H1 (cell line): ENCODE measurements at regions of chr3 and their contacts with region 1.

Region 1: DNA sequence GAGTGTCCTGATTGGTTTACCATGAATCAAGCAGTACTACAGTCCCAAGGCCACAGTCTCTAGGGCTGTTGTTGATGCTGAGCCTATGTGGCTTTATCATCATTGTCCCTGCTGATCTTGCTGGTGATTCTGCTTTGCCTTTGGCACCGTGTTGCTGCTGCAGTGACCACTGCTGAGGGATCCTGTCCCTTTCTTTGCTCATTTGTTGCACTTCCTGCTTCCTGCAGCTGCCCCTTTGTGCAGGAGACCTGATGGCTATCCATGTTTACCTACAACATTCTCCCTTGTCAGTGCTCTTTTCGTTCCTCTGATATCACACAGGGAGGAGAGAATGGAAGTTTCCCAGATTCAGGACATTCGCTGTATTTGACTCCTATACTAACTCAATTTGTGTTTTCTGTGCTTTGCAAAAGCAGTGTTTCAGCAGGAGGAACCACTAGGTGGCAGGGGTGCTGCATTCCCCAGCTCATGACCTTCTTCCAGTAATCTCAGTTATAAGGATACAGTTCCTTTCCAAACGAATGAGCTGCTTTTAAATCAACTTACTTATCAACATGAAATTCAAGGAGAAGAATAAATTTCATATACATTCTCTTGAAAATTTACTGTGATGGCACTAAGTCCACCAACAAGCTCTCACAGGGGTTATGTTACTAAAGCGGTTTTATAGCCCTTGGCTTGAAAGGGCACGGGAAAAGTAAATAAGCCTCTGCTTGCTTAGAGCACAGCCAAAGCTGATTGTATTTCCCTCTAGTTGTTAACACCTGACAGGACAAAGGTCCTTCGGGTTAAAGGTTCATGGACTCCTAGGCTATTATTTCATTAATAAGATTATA is 9.7 kb upstream of the THUMPD3 start:
- DNase-seq: peak; percentile 34 to 74
- H3K4me3 ChIP-seq: no peak overlapping the region
- H3K27ac ChIP-seq: peak overlapping the region; percentile 76
- H3K4me1 ChIP-seq: peaks cover 10 to 30% (median 16%) of the 10 kb centered on the region in 4 experiments
- H3K27me3 ChIP-seq: no peaks in the 10 kb centered on the region
- CTCF ChIP-seq: peak; percentile 56 to 90 (median 80)
- EP300 ChIP-seq: no peak
- POLR2A ChIP-seq: no peak
- RAD21 ChIP-seq: peak; percentile 86 to 88

Region 2: GRCh38 chr3:9047452-9048346 is 305.4 kb before region 1 on chr3:
- CTCF ChIA-PET with region 1: no interaction called
- POLR2A ChIA-PET with region 1: no interaction called
- DNase-seq: no peak
- H3K4me3 ChIP-seq: no peak overlapping the region
- H3K27ac ChIP-seq: no peak overlapping the region
- H3K4me1 ChIP-seq: peaks cover 0 to 4% (median 0%) of the 10 kb centered on the region in 4 experiments; a peak in 2 of 7 replicates
- H3K27me3 ChIP-seq: no peaks in the 10 kb centered on the region
- CTCF ChIP-seq: no peak
- EP300 ChIP-seq: no peak
- POLR2A ChIP-seq: no peak
- RAD21 ChIP-seq: no peak

Region 3: GRCh38 chr3:9147215-9147895 is 205.8 kb before region 1 on chr3:
- CTCF ChIA-PET with region 1: no interaction called
- POLR2A ChIA-PET with region 1: no interaction called
- DNase-seq: no peak
- H3K4me3 ChIP-seq: no peak overlapping the region
- H3K27ac ChIP-seq: no peak overlapping the region
- H3K4me1 ChIP-seq: no peaks in the 10 kb centered on the region
- H3K27me3 ChIP-seq: no peaks in the 10 kb centered on the region
- CTCF ChIP-seq: no peak
- EP300 ChIP-seq: no peak
- POLR2A ChIP-seq: no peak
- RAD21 ChIP-seq: no peak

Region 4: GRCh38 chr3:9266716-9267115 is 86.4 kb before region 1 on chr3:
- CTCF ChIA-PET with region 1: no interaction called
- POLR2A ChIA-PET with region 1: no interaction called
- DNase-seq: no peak
- H3K4me3 ChIP-seq: no peak overlapping the region
- H3K27ac ChIP-seq: no peak overlapping the region
- H3K4me1 ChIP-seq: no peaks in the 10 kb centered on the region
- H3K27me3 ChIP-seq: no peaks in the 10 kb centered on the region
- CTCF ChIP-seq: no peak
- EP300 ChIP-seq: no peak
- POLR2A ChIP-seq: no peak
- RAD21 ChIP-seq: no peak

Region 5: DNA sequence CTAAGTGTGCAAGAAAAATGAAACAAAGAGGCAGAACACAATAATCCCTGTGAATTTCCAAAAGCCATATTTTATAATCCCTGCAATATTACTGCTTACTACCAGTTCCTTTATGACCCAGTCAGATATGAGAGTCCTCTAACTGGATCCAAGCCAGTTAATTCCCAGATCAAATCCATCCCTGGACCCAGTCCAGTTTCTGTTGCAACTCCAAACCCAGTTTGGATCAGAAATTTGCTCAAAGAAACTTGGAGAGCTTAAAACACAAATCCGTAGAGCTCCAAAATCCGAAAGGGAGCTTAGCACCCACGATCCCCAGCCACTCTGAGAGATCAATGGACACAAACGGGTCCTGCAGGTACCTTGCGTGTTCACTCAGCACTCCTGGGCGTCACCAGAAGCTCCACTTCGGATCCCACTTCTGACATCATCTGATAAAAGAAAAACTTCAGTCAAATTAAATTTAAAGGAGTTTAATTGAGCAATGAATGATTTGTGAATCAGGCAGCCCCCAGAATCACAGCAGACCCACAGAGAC is 22.9 kb before region 1 on chr3:
- CTCF ChIA-PET with region 1: interaction called, 12 read pairs
- POLR2A ChIA-PET with region 1: interaction called, 4 read pairs
- DNase-seq: no peak
- H3K4me3 ChIP-seq: no peak overlapping the region
- H3K27ac ChIP-seq: no peak overlapping the region
- H3K4me1 ChIP-seq: peaks cover 0 to 2% (median 0%) of the 10 kb centered on the region in 4 experiments; a peak in 1 of 7 replicates
- H3K27me3 ChIP-seq: no peaks in the 10 kb centered on the region
- CTCF ChIP-seq: no peak
- EP300 ChIP-seq: no peak
- POLR2A ChIP-seq: no peak
- RAD21 ChIP-seq: no peak

Region 6: DNA sequence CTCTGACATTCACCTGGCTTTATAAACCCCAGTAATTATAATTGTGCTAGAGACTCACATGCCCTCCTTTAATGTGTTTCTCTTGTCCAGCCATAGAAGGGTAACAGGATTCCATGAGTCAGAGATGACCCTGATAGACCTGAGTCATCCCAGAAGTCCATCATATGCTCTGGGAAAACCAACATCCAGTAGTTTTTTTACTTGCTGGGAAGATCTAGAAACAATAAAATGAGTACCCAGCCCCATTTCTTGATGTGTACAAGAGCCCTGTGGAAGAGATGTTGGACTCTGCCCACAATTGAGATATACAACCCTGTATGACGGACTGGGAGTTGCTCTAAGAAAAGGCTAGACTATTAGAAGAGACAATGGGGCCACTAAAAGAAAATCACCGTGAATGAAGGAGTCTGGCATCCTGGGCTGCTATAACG is 12.6 kb before region 1 on chr3:
- CTCF ChIA-PET with region 1: interaction called, 10 read pairs
- POLR2A ChIA-PET with region 1: interaction called, 6 read pairs
- DNase-seq: no peak
- H3K4me3 ChIP-seq: no peak overlapping the region
- H3K27ac ChIP-seq: no peak overlapping the region
- H3K4me1 ChIP-seq: peaks cover 0 to 6% (median 0%) of the 10 kb centered on the region in 4 experiments; a peak in 1 of 7 replicates
- H3K27me3 ChIP-seq: no peaks in the 10 kb centered on the region
- CTCF ChIP-seq: no peak
- EP300 ChIP-seq: no peak
- POLR2A ChIP-seq: no peak
- RAD21 ChIP-seq: no peak

Region 7: DNA sequence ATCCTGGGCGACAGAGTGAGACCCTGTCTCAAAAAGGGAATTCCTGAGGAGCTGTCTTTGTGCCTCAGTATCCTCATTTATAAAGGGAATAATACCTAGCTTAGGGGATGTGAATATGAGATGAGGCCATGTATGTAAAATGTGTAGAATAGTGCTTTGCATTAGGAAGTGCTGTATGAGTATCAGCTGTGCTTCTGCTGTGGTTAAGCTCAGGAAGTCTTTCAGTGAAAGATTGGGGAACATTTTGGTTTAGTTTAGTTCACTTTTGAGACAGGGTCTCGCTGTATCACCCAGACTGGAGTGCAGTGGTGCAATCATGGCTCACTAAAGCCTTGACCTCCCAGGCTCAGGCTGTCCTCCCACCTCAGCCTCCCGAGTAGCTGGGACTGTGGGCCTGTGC is 20.3 kb after region 1 on chr3:
- CTCF ChIA-PET with region 1: interaction called, 10 read pairs
- POLR2A ChIA-PET with region 1: interaction called, 3 read pairs
- DNase-seq: no peak
- H3K4me3 ChIP-seq: no peak overlapping the region
- H3K27ac ChIP-seq: no peak overlapping the region
- H3K4me1 ChIP-seq: no peaks in the 10 kb centered on the region
- H3K27me3 ChIP-seq: no peaks in the 10 kb centered on the region
- CTCF ChIP-seq: no peak
- EP300 ChIP-seq: no peak
- POLR2A ChIP-seq: no peak
- RAD21 ChIP-seq: no peak

Region 8: DNA sequence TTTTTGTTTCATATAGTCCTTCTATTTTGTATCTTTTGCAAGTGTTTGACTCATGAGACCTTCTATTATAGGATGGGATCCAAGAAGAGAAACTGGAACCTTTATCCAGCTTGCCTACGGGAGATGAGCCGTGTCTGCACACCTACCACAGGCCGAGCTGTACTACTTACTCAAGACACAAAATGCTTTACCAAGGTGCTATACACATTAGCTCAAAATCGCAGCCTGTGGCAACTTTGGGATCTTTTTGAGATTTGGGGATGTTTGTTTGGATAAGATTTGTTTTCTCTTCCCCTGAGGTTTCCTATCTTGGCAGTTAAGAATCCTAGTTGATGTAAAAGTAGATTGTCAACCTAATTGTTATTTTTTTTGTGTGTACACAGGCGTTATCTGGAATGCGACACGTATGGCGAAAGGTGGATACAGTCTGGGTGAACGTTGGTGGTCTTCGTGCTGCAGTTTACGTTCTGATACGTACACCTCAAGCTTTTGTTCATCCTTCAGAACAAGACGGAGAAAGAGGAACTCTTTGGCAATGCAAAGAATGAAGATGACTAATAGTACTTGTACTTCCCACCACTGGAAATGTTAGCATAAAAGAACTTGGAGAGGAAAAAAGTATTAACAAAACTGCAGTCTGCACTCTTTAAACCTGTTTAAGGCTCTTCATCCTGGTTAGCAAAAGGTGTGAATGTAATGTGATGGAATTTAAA is 31.2 kb after region 1 on chr3:
- CTCF ChIA-PET with region 1: interaction called, 7 read pairs
- POLR2A ChIA-PET with region 1: interaction called, 14 read pairs
- DNase-seq: no peak
- H3K4me3 ChIP-seq: no peak overlapping the region
- H3K27ac ChIP-seq: no peak overlapping the region
- H3K4me1 ChIP-seq: no peaks in the 10 kb centered on the region
- H3K27me3 ChIP-seq: no peaks in the 10 kb centered on the region
- CTCF ChIP-seq: no peak
- EP300 ChIP-seq: no peak
- POLR2A ChIP-seq: peak in 1 of 2 experiments; percentile 24; a peak in 1 of 3 replicates
- RAD21 ChIP-seq: no peak